H1 (cell line): ENCODE measurements at regions of chr9 and their contacts with region 1.

Region 1: DNA sequence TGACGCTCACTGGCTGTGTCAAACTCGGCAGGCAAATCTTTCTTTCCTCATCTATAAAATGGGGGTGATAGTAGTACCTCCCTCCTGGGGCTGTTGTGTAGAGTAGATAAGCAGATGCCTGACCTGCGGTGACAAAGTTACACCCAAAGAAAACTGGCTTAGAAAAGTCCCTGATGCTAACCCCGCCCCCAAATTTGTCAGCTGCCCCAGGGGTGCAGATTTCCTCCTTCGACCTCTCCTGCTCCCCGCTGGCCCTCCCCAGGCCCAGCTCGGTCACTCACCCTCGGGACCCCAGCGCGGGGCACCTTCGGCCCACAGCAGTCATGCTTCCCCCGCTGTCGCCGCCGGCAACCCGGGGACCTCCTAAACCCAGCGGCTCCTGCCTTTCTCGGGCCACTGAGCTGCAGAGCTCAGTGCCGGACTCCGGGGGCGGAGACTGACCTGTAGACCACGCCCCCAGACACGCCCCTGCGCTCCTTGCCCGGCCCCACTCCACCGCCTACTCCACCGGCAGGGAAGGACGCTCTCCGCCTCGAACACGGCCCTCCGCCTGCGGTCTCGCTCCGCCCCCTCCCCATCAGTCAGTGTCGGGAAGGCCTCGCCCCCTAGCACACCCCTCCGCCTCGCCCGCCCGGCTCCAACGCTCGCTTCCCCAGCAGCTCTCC is 7.4 kb downstream of the SH2D3C start:
- DNase-seq: peak; percentile 97 to 99
- H3K4me3 ChIP-seq: peak overlapping the region; percentile 50 to 72 (median 60)
- H3K27ac ChIP-seq: no peak overlapping the region
- H3K4me1 ChIP-seq: peaks cover 1 to 16% (median 8%) of the 10 kb centered on the region in 4 experiments
- H3K27me3 ChIP-seq: no peaks in the 10 kb centered on the region
- CTCF ChIP-seq: no peak
- EP300 ChIP-seq: no peak
- POLR2A ChIP-seq: no peak
- RAD21 ChIP-seq: no peak

Region 2: GRCh38 chr9:127785023-127785932 is 14.2 kb after region 1 on chr9:
- CTCF ChIA-PET with region 1: interaction called, 227 read pairs
- POLR2A ChIA-PET with region 1: interaction called, 7 read pairs
- DNase-seq: peak in 1 of 2 experiments; percentile 95
- H3K4me3 ChIP-seq: peak overlapping the region; percentile 43 to 100 (median 57)
- H3K27ac ChIP-seq: peak overlapping the region; percentile 62; the same call in 1 of the 2 replicates
- H3K4me1 ChIP-seq: peaks cover 0 to 6% (median 3%) of the 10 kb centered on the region in 4 experiments; a peak in 4 of 7 replicates
- H3K27me3 ChIP-seq: no peaks in the 10 kb centered on the region
- CTCF ChIP-seq: peak in 2 of 3 experiments; percentile 65 to 91; a peak in 3 of 4 replicates
- EP300 ChIP-seq: 0 out of 3 replicates have a peak, but pooled peaks of 1 of the 2 experiments have one; percentile 40
- POLR2A ChIP-seq: no peak
- RAD21 ChIP-seq: peak; percentile 77 to 84

Region 3: GRCh38 chr9:127860260-127861178 is 89.5 kb after region 1 on chr9:
- CTCF ChIA-PET with region 1: no interaction called
- POLR2A ChIA-PET with region 1: no interaction called
- DNase-seq: no peak
- H3K4me3 ChIP-seq: no peak overlapping the region
- H3K27ac ChIP-seq: no peak overlapping the region
- H3K4me1 ChIP-seq: no peaks in the 10 kb centered on the region; a peak in 1 of 7 replicates
- H3K27me3 ChIP-seq: no peaks in the 10 kb centered on the region
- CTCF ChIP-seq: no peak
- EP300 ChIP-seq: no peak
- POLR2A ChIP-seq: no peak
- RAD21 ChIP-seq: no peak